CD4-positive, alpha-beta memory T cell (primary cell): ENCODE measurements at regions of chrX and their contacts with region 1.

Region 1: DNA sequence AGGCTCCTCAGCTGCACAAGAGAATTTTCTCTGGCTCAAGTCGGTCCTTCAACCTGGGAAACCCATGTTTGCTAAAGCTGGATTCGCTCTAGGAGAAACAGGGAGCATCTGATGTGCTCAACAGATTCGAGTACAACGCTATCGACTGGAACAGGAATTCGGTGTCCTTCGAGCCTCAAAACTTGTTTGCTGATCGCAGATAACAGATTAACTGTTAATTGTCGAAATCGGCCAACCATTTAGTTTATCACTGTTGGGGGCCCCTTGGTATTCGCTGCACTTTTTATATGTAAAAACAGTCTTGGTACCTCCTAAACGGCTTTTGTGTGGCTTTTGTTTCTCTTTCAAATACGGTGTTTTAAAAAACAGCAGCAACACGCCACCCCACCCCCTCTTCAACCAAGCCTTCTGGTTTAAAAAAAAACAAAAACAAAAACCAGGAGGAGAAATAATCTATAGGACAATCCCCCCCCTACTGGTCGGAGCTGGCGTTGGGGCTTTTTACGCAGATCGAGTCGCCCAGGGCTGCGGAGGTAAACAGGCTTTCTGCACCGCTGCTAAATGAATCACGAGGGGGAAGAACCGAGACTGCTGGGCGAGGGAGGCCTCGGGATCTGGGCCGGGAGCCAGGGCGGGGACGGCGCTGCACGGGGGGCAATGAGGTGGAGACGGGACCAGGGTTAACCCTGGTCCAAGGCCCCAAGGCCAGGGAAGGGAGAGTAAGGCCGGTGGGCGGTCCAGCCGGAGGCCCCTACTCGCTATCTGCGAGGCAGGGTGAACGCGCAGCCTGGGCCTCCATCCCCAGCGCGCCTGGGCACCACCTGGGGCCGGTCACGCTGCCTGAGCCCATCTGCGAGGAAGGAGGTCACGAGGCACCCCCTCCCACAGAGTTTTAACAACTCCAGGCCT is 71.7 kb upstream of the BCOR start:
- DNase-seq: peak; percentile 74 to 87 (median 80)
- H3K4me3 ChIP-seq: peak overlapping the region in 1 of 2 donors; percentile 49
- H3K4me3 Mint-ChIP-seq: peak overlapping the region; percentile 76 to 94 (median 86)
- H3K27ac ChIP-seq: peak overlapping the region; percentile 84
- H3K27ac Mint-ChIP-seq: peak overlapping the region; percentile 93 to 99 (median 98)
- H3K4me1 ChIP-seq: peaks cover 50% of the 10 kb centered on the region
- H3K4me1 Mint-ChIP-seq: peaks cover 18 to 64% (median 41%) of the 10 kb centered on the region in 4 donors
- H3K27me3 ChIP-seq: no peaks in the 10 kb centered on the region
- H3K27me3 Mint-ChIP-seq: no peaks in the 10 kb centered on the region

Region 2: DNA sequence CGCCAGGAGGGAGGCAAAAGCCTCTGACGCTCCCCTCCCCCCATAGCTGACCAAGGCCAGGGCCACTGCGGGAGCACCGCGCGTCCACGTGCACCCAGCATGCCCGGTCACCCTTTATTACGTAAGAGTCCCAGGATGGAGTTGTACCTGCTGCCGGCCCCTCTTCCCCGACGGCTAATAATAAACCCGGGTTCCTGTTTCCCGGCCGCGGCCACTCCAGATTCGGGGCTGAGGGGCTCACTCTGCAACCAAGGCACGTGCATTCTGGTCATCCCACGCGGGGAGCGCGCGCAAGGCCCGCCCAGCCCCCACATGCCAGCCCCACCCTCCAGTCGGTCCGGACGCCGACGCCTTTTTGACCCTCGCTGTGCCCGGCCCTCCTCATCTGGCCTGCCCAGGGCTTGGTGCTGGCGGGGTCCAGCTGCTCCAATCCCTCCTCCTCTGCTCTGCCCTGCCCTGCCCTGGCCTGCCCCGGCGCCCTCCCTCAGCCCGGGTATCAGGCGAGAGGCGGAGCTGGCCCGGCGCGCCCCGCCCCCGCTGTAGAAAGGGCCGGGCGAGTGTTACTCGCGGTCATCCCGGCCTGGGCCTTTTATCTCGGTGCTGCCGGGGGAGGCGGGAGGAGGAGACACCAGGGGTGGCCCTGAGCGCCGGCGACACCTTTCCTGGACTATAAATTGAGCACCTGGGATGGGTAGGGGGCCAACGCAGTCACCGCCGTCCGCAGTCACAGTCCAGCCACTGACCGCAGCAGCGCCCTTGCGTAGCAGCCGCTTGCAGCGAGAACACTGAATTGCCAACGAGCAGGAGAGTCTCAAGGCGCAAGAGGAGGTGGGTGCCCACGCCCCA is 1365.6 kb before region 1 on chrX:
- CTCF ChIA-PET with region 1: no interaction called
- POLR2A ChIA-PET with region 1: interaction called, 3 read pairs
- intact Hi-C with region 1: loop called (anchors 5 kb)
- DNase-seq: peak; percentile 54 to 67 (median 58)
- H3K4me3 ChIP-seq: peak overlapping the region; percentile 65 to 72
- H3K4me3 Mint-ChIP-seq: peak overlapping the region; percentile 85 to 95 (median 92)
- H3K27ac ChIP-seq: peak overlapping the region; percentile 80
- H3K27ac Mint-ChIP-seq: peak overlapping the region; percentile 86 to 95 (median 93)
- H3K4me1 ChIP-seq: peaks cover 26% of the 10 kb centered on the region
- H3K4me1 Mint-ChIP-seq: peaks cover 11 to 62% (median 24%) of the 10 kb centered on the region in 4 donors
- H3K27me3 ChIP-seq: no peaks in the 10 kb centered on the region
- H3K27me3 Mint-ChIP-seq: no peaks in the 10 kb centered on the region

Region 3: GRCh38 chrX:39772057-39772832 is 397.2 kb before region 1 on chrX:
- CTCF ChIA-PET with region 1: no interaction called
- POLR2A ChIA-PET with region 1: interaction called, 24 read pairs
- intact Hi-C with region 1: loop called (anchors 2 kb)
- DNase-seq: peak; percentile 33 to 74 (median 41)
- H3K4me3 ChIP-seq: no peak overlapping the region
- H3K4me3 Mint-ChIP-seq: peak overlapping the region in 7 of 8 donors; percentile 46 to 85 (median 70)
- H3K27ac ChIP-seq: peak overlapping the region; percentile 48
- H3K27ac Mint-ChIP-seq: peak overlapping the region; percentile 83 to 95 (median 90)
- H3K4me1 ChIP-seq: peaks cover 64% of the 10 kb centered on the region
- H3K4me1 Mint-ChIP-seq: peaks cover 31 to 59% (median 42%) of the 10 kb centered on the region in 4 donors
- H3K27me3 ChIP-seq: no peaks in the 10 kb centered on the region
- H3K27me3 Mint-ChIP-seq: no peaks in the 10 kb centered on the region

Region 4: GRCh38 chrX:40013266-40014195 is 155.9 kb before region 1 on chrX:
- CTCF ChIA-PET with region 1: no interaction called
- POLR2A ChIA-PET with region 1: interaction called, 18 read pairs
- intact Hi-C with region 1: loop called (anchors 5 kb)
- DNase-seq: peak in 2 of 5 donors; percentile 28 to 31
- H3K4me3 ChIP-seq: peak overlapping the region in 1 of 2 donors; percentile 49
- H3K4me3 Mint-ChIP-seq: peak overlapping the region; percentile 64 to 84 (median 78)
- H3K27ac ChIP-seq: no peak overlapping the region
- H3K27ac Mint-ChIP-seq: peak overlapping the region in 2 of 7 donors; percentile 40 to 60
- H3K4me1 ChIP-seq: peaks cover 22% of the 10 kb centered on the region
- H3K4me1 Mint-ChIP-seq: peaks cover 4 to 26% (median 16%) of the 10 kb centered on the region in 4 donors
- H3K27me3 ChIP-seq: no peaks in the 10 kb centered on the region
- H3K27me3 Mint-ChIP-seq: peaks cover 3 to 5% of the 10 kb centered on the region in 2 donors

Region 5: DNA sequence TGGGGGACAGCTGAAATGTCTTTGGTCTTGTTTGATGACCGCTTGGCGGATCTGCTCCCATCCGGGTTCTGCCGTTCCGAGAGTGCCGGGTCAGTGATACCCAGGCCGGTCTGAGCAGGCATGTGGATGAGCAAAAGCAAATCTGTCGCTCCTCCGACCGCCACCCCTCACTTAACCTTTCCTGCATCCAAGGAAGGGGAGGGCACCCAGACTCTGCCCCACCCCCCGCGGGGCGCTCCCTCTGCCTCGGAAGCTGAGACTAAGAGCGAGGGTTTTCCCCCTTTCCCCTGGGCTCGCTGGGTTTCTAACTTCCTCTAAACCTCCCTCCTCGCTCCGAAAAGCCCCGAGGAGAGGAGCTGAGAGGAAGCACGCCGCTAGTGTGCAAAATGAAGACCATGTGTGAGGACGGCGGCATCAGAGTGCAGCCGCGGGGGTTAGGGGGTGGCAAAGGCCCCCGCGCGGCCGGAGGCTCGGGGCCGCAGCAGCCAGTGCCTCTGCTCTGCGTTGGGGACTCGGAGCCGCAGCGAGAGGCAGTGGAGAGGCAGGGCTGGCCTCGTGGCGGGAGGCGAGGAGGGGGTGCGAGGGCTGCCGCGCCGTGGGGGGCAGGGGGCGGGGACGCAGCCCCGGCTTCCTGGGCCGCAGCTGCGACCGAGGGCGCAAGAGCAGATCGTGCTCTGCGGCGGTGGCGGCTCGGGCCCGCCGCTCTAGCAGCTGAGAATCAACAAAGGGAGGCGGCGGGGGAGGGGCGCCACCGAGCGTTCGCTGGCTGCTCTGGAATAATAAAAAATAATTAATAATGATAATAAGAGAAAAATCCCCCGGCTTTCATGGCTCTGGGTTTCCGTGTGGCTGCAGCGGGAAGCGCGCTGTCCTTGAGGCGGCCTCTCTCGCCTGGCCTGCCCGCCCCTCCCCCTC is 15.9 kb before region 1 on chrX:
- CTCF ChIA-PET with region 1: interaction called, 5 read pairs
- POLR2A ChIA-PET with region 1: interaction called, 22 read pairs
- intact Hi-C with region 1: loop called (anchors 2 kb)
- DNase-seq: peak in 4 of 5 donors; percentile 44 to 83 (median 54)
- H3K4me3 ChIP-seq: peak overlapping the region; percentile 3 to 50
- H3K4me3 Mint-ChIP-seq: peak overlapping the region; percentile 81 to 92 (median 84)
- H3K27ac ChIP-seq: no peak overlapping the region
- H3K27ac Mint-ChIP-seq: peak overlapping the region; percentile 12 to 79 (median 60)
- H3K4me1 ChIP-seq: peaks cover under 1% of the 10 kb centered on the region
- H3K4me1 Mint-ChIP-seq: peaks cover 1 to 18% (median 11%) of the 10 kb centered on the region in 4 donors
- H3K27me3 ChIP-seq: no peaks in the 10 kb centered on the region
- H3K27me3 Mint-ChIP-seq: no peaks in the 10 kb centered on the region

Region 6: DNA sequence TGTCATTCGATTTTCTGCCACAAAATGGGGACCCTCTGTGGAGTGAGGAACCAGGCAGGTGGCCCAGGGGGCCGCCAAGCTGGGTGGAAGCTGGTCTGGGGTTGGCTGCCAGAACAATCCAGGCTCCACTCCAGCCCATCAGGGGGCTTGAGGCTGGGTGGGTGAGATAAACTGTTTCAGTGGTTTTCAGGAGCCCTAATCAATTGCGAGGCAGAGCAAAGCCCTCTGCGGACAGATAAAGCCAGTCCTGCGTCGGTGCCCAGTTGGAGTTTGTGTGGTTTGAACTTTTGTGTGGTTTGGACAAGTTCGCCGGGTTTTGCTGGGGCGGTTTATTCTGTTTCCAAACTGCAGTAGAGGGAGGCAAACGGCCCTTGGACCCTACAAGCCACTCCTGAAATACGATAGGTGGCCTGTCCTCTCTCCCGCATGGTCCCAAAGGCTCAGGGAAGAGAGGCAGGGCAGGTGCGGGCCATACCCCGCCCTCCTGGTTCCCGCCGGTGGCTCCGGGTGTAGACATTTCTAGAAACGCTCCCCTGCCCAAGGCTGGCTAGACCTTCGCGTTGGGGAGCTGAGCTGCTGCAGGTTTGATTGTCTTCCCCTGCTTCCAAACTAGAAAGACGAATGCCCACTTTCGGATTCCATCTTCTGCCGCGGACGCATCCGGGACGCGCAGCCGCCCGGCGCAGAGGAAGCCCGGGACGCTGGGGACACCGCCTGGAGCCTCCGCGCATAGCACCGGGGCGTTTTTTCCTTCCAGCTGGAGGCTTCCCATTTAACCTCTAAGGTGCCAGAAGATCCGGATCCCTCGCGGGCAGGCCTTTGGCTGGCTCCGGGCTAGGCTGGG is 97.3 kb after region 1 on chrX:
- CTCF ChIA-PET with region 1: interaction called, 5 read pairs
- POLR2A ChIA-PET with region 1: interaction called, 10 read pairs
- intact Hi-C with region 1: loop called (anchors 2 kb)
- DNase-seq: peak; percentile 35 to 47 (median 40)
- H3K4me3 ChIP-seq: peak overlapping the region; percentile 36 to 57
- H3K4me3 Mint-ChIP-seq: peak overlapping the region; percentile 74 to 87 (median 82)
- H3K27ac ChIP-seq: no peak overlapping the region
- H3K27ac Mint-ChIP-seq: peak overlapping the region in 3 of 7 donors; percentile 27 to 82 (median 63)
- H3K4me1 ChIP-seq: peaks cover 10% of the 10 kb centered on the region
- H3K4me1 Mint-ChIP-seq: peaks cover 0 to 16% (median 3%) of the 10 kb centered on the region in 4 donors
- H3K27me3 ChIP-seq: no peaks in the 10 kb centered on the region
- H3K27me3 Mint-ChIP-seq: no peaks in the 10 kb centered on the region